Activated CD4-positive, alpha-beta T cell treated with anti-CD3 and anti-CD28 coated beads, Interleukin-2, amount 10 ng/mL, durations not matched to agents 24 days and 14 days (primary cell): ENCODE measurements at regions of chr4 and their contacts with region 1.

Region 1: GRCh38 chr4:2241410-2242353 is at the starts of genes HAUS3 and POLN:
- DNase-seq: peak; percentile 100
- H3K4me3 Mint-ChIP-seq: peak within 1 kb of the TSS; percentile 84
- H3K27ac Mint-ChIP-seq: peak within 1 kb of the TSS; percentile 93
- H3K4me1 Mint-ChIP-seq: peaks cover 49% of the 10 kb centered on the region
- H3K27me3 Mint-ChIP-seq: peaks cover 2% of the 10 kb centered on the region
- total RNA-seq, gene HAUS3: 19.3 and 19.4 TPM in 2 replicates
- total RNA-seq, gene POLN: 1.9 and 2.3 TPM in 2 replicates

Region 2: DNA sequence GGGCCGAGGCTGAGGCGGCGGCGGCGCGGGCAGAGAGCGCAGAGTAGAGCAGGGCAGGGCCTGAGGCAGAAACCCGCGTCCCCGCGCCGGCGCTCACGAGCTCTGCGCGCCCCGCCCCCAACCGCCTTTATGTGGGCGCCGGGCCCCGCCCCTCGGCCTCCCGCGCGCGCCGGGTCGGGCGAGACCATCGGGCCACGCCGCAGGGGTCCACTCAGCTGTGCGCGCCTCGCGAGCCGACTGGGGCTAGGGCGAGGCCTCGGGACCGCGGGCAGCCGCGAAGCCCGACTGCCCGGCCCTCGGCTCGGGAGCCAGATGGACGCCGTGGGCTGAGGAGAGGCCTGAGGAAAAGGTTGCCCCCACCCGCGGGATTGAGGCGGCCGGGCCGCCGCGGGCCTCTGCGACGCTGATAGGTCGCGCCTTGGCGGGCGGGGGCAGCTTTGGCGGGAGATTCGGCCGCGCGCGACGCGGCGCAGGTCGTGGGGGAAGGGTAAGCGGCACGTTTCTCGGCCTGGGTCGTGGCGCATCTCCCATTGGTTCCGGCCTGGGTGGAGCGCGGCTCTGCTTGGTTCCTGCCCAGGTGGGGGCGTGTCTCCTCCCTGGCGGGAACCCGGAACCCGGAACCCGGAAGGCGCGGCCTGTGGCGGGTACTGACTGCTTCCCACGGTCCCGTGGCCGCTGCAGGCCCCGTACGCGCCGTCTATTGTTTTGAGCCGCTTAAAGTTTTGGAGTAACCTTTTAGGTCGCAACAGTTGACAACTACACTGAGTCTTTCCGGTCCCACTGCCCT is 529.3 kb before region 1 on chr4 and contains the start of gene SLBP:
- intact Hi-C with region 1: loop called (anchors 10 kb)
- DNase-seq: peak; percentile 100
- H3K4me3 Mint-ChIP-seq: peak within 1 kb of the TSS; percentile 95
- H3K27ac Mint-ChIP-seq: peak within 1 kb of the TSS; percentile 98
- H3K4me1 Mint-ChIP-seq: peaks cover 49% of the 10 kb centered on the region
- H3K27me3 Mint-ChIP-seq: no peaks in the 10 kb centered on the region
- total RNA-seq, gene SLBP: 150 and 156 TPM in 2 replicates

Region 3: GRCh38 chr4:2008875-2009703 is 232.6 kb before region 1 on chr4 and contains the start of gene NELFA:
- intact Hi-C with region 1: loop called (anchors 1 kb)
- DNase-seq: peak; percentile 98
- H3K4me3 Mint-ChIP-seq: peak within 1 kb of the TSS; percentile 91
- H3K27ac Mint-ChIP-seq: peak within 1 kb of the TSS; percentile 91
- H3K4me1 Mint-ChIP-seq: peaks cover 26% of the 10 kb centered on the region
- H3K27me3 Mint-ChIP-seq: peaks cover 10% of the 10 kb centered on the region
- total RNA-seq, gene NELFA: 51.1 and 57.4 TPM in 2 replicates

Region 4: GRCh38 chr4:2262143-2262943 is 20.7 kb after region 1 on chr4:
- intact Hi-C with region 1: loop called (anchors 1 kb)
- DNase-seq: peak; percentile 99
- H3K4me3 Mint-ChIP-seq: peak overlapping the region; percentile 76
- H3K27ac Mint-ChIP-seq: peak overlapping the region; percentile 82
- H3K4me1 Mint-ChIP-seq: no peaks in the 10 kb centered on the region
- H3K27me3 Mint-ChIP-seq: no peaks in the 10 kb centered on the region

Region 5: DNA sequence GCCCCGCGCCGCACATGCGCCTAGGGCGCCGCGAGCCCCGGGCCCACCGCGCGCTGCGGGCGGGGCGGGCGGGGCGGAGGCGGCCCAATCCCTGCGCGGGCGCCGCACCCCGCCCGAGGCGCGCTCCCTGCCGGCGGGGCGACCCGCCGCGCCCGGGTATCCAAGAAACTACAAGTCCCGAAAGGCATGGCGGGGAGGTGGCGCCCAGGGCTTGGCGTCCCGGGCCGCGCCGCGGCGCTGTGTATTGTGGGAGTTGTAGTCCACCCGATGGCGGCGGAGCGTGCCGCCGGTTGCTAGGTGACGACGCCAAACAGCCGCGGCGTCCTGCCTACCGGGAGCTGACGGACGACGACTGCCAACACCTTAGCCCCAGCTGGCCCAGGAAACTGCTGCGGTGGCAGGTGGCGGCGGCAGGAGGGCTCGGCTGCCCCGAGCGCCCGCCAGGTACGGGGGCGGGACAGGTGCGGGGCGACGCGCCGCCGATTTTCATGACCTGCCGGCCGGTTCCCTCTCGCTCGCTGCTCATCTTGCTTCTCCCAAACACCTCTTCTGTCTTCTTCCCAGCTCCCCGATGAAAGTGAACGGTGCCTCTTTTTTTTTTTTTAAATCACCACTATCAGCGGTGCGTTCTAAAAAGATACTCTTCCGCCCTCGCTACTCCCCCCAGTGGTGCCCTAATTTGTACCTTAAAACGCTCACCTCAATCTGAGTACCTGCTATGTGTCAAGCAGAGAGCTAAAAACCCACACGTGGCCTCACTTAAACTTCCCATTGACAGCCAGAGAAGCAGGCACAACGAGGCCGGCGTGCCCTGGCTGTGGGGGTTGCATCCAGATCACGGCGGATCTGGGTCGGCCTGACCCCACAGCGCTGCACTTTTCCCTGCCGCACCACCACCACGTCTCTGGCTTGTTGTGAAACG is 177.2 kb after region 1 on chr4 and contains the start of gene CFAP99:
- intact Hi-C with region 1: loop called (anchors 1 kb)
- DNase-seq: peak; percentile 98
- H3K4me3 Mint-ChIP-seq: peak within 1 kb of the TSS; percentile 91
- H3K27ac Mint-ChIP-seq: peak within 1 kb of the TSS; percentile 86
- H3K4me1 Mint-ChIP-seq: peaks cover 35% of the 10 kb centered on the region
- H3K27me3 Mint-ChIP-seq: peaks cover 59% of the 10 kb centered on the region
- total RNA-seq, gene CFAP99: not detected in 2 replicates

Region 6: GRCh38 chr4:2468445-2469192 is 226.9 kb after region 1 on chr4 and contains the start of gene RNF4:
- intact Hi-C with region 1: loop called (anchors 1 kb)
- DNase-seq: peak; percentile 98
- H3K4me3 Mint-ChIP-seq: peak within 1 kb of the TSS; percentile 90
- H3K27ac Mint-ChIP-seq: peak within 1 kb of the TSS; percentile 99
- H3K4me1 Mint-ChIP-seq: peaks cover 30% of the 10 kb centered on the region
- H3K27me3 Mint-ChIP-seq: peaks cover 4% of the 10 kb centered on the region
- total RNA-seq, gene RNF4: 94.8 and 95.4 TPM in 2 replicates

Region 7: GRCh38 chr4:3041192-3042142 is 799.8 kb after region 1 on chr4:
- intact Hi-C with region 1: no loop called
- DNase-seq: peak; percentile 84
- H3K4me3 Mint-ChIP-seq: peak overlapping the region; percentile 86
- H3K27ac Mint-ChIP-seq: peak overlapping the region; percentile 89
- H3K4me1 Mint-ChIP-seq: peaks cover 61% of the 10 kb centered on the region
- H3K27me3 Mint-ChIP-seq: peaks cover 6% of the 10 kb centered on the region

Region 8: GRCh38 chr4:3531879-3532713 is 1290.4 kb after region 1 on chr4 and contains the start of gene LRPAP1:
- intact Hi-C with region 1: loop called (anchors 5 kb)
- DNase-seq: peak; percentile 96
- H3K4me3 Mint-ChIP-seq: peak within 1 kb of the TSS; percentile 100
- H3K27ac Mint-ChIP-seq: peak within 1 kb of the TSS; percentile 97
- H3K4me1 Mint-ChIP-seq: peaks cover 21% of the 10 kb centered on the region
- H3K27me3 Mint-ChIP-seq: peaks cover 15% of the 10 kb centered on the region
- total RNA-seq, gene LRPAP1: 76.1 and 81.6 TPM in 2 replicates